Esophagus squamous epithelium (tissue), 5 donors: ENCODE measurements at regions of chr15 and their contacts with region 1.

Region 1: GRCh38 chr15:50686468-50687301 is at the start of gene TRPM7:
- DNase-seq: peak; percentile 62
- H3K4me3 ChIP-seq: peak within 1 kb of the TSS; percentile 46 to 86 (median 72)
- H3K27ac ChIP-seq: peak within 1 kb of the TSS; percentile 82 to 97 (median 91)
- H3K4me1 ChIP-seq: peaks cover 6 to 52% (median 28%) of the 10 kb centered on the region in 3 donors
- H3K27me3 ChIP-seq: no peaks in the 10 kb centered on the region
- CTCF ChIP-seq: peak in 1 of 6 experiments; percentile 14
- POLR2A ChIP-seq: peak in 3 of 4 donors; percentile 48 to 80 (median 60)
- total RNA-seq, gene TRPM7: 10.7 to 42.7 (median 27.2) TPM

Region 2: GRCh38 chr15:49927189-49927868 is 759.4 kb before region 1 on chr15:
- intact Hi-C with region 1: no loop called
- DNase-seq: no peak
- H3K4me3 ChIP-seq: no peak overlapping the region
- H3K27ac ChIP-seq: no peak overlapping the region
- H3K4me1 ChIP-seq: no peaks in the 10 kb centered on the region
- H3K27me3 ChIP-seq: no peaks in the 10 kb centered on the region
- CTCF ChIP-seq: no peak
- POLR2A ChIP-seq: no peak

Region 3: DNA sequence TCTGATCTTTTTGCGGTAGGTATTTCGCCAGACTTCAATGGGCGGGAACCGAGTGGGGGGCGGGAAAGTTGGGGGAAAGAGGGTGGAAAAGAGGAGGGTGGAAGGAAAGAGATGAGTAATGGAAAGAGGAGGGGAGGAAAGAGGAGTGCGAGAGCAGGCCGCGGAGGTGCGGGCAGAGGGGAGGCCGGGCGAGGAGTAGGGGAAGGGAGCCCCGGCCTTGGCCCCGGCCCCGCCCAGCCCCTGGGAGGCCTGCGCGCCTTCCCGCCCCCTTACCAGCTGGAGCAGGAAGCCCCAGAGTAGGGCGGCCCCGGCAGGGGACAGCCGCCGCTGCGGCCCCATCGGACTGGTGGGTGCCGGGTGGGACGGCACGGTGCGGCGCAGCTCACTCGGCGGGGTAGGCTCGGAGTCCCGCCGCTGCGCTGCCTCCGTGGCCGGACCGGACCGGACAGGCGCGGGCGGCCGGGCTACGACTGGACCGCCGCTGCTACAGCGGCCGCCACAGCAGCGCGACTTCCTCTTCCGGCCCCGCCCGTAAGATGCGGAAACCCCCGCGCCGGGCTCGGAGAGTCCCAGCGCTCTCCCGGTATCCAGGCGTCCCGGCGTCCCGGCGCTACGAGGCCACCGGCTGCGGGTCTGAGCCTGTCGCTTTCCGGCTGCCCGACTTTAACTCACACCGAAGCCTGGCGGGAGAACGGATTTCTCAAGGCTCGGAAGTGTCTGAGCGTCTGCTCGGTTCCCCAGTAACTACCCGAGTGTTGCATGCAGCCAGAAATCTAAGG is 78.7 kb after region 1 on chr15 and contains the start of gene SPPL2A:
- intact Hi-C with region 1: loop called (anchors 2 kb)
- DNase-seq: peak; percentile 26
- H3K4me3 ChIP-seq: peak within 1 kb of the TSS; percentile 77 to 96 (median 89)
- H3K27ac ChIP-seq: peak within 1 kb of the TSS; percentile 91 to 98 (median 96)
- H3K4me1 ChIP-seq: peaks cover 0 to 52% (median 20%) of the 10 kb centered on the region in 3 donors
- H3K27me3 ChIP-seq: no peaks in the 10 kb centered on the region
- CTCF ChIP-seq: peak in 1 of 6 experiments; percentile 5
- POLR2A ChIP-seq: peak in 3 of 4 donors; percentile 6 to 93 (median 91)
- total RNA-seq, gene SPPL2A: 63.8 to 128 (median 100) TPM

Region 4: GRCh38 chr15:50876989-50877360 is 190.3 kb after region 1 on chr15:
- intact Hi-C with region 1: loop called (anchors 10 kb)
- DNase-seq: no peak
- H3K4me3 ChIP-seq: peak overlapping the region in 3 of 4 donors; percentile 38 to 66 (median 41)
- H3K27ac ChIP-seq: peak overlapping the region in 1 of 4 donors; percentile 45
- H3K4me1 ChIP-seq: peaks cover 0 to 11% (median 5%) of the 10 kb centered on the region in 3 donors
- H3K27me3 ChIP-seq: no peaks in the 10 kb centered on the region
- CTCF ChIP-seq: peak; percentile 88 to 98 (median 94)
- POLR2A ChIP-seq: no peak